ENCODE measurements at regions of chr16 and their contacts with region 1.

Region 1: GRCh38 chr16:46689365-46690280 is at the start of gene ORC6:
- DNase-seq: peak; percentile 90 to 99 (median 97)
- ATAC-seq: peak; percentile 85
- H3K4me3 ChIP-seq: peak within 1 kb of the TSS; percentile 99
- H3K4me3 Mint-ChIP-seq: no peak within 1 kb of the TSS
- H3K27ac ChIP-seq: peak within 1 kb of the TSS; percentile 94
- H3K27ac Mint-ChIP-seq: no peak within 1 kb of the TSS
- H3K4me1 ChIP-seq: peaks cover 16 to 22% of the 10 kb centered on the region in 2 donors
- H3K4me1 Mint-ChIP-seq: peaks cover 25 to 48% (median 36%) of the 10 kb centered on the region in 7 donors
- H3K27me3 ChIP-seq: no peaks in the 10 kb centered on the region
- H3K27me3 Mint-ChIP-seq: no peaks in the 10 kb centered on the region
- total RNA-seq, gene ORC6: 2.7 to 27.3 (median 5.1) TPM

Region 2: DNA sequence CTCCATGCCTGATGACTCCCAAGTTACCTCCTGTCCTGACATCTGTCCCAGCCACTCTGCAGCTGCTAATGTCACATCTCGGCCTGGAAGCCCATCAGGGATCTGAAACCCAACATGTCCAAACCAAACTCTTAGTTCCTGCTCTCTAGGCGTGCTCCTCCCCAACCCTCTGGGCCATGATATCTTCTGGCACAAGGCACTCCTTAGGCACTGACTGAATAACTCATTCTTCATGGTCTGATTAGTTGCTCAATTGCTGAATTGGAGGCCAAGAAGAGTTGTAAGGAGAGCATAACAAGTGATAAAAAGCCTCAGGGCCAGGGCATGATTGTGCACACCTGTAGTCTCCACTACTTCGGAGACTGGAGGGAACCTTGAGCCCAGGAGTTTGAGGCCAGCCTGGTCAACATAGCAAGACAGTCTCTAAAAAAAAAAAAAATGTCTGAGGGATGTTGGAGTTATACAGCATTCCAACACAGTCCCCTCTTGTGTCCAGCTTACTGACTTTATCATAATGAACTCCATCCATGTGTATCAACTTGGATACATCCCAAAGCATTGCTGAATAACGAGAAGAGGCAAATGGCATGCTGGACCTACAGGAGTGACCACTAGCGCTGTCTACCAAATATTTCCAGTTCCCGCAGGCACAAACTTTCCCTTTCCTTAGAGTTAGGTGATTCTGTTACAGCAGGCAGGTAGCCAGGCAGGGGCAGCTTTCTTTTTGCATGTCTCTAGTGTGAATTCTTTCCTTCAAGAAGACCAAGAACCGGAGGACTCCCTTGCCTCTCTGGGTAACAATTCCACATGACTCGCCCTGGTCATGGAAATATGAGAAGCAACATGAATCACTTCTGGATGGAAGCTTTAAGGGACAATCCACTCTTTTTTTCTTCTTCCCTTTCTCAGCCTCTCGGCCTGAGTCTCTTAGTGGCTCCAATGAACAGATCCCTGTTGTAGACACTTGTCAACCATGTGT is 50.4 kb before region 1 on chr16:
- CTCF ChIA-PET with region 1: no interaction called
- POLR2A ChIA-PET with region 1: no interaction called
- intact Hi-C with region 1: no loop called
- DNase-seq: no peak
- ATAC-seq: no peak
- H3K4me3 ChIP-seq: no peak overlapping the region
- H3K4me3 Mint-ChIP-seq: no peak overlapping the region
- H3K27ac ChIP-seq: no peak overlapping the region
- H3K27ac Mint-ChIP-seq: no peak overlapping the region
- H3K4me1 ChIP-seq: no peaks in the 10 kb centered on the region
- H3K4me1 Mint-ChIP-seq: no peaks in the 10 kb centered on the region
- H3K27me3 ChIP-seq: no peaks in the 10 kb centered on the region
- H3K27me3 Mint-ChIP-seq: no peaks in the 10 kb centered on the region

Region 3: GRCh38 chr16:46673320-46674013 is 16.2 kb before region 1 on chr16:
- CTCF ChIA-PET with region 1: interaction called, 5 read pairs
- POLR2A ChIA-PET with region 1: no interaction called
- intact Hi-C with region 1: loop called (anchors 1 kb)
- DNase-seq: peak in 8 of 9 donors; percentile 10 to 59 (median 44)
- ATAC-seq: peak; percentile 97
- H3K4me3 ChIP-seq: no peak overlapping the region
- H3K4me3 Mint-ChIP-seq: no peak overlapping the region
- H3K27ac ChIP-seq: no peak overlapping the region
- H3K27ac Mint-ChIP-seq: peak overlapping the region in 1 of 9 donors; percentile 21
- H3K4me1 ChIP-seq: no peaks in the 10 kb centered on the region
- H3K4me1 Mint-ChIP-seq: peaks cover 0 to 3% (median 0%) of the 10 kb centered on the region in 7 donors
- H3K27me3 ChIP-seq: no peaks in the 10 kb centered on the region
- H3K27me3 Mint-ChIP-seq: no peaks in the 10 kb centered on the region

Region 4: GRCh38 chr16:46883690-46884512 is 194.3 kb after region 1 on chr16 and contains the start of gene GPT2:
- CTCF ChIA-PET with region 1: no interaction called
- POLR2A ChIA-PET with region 1: no interaction called
- intact Hi-C with region 1: loop called (anchors 1 kb)
- DNase-seq: peak; percentile 29 to 89 (median 57)
- ATAC-seq: peak; percentile 97
- H3K4me3 ChIP-seq: peak within 1 kb of the TSS; percentile 67
- H3K4me3 Mint-ChIP-seq: peak within 1 kb of the TSS; percentile 86 to 92 (median 89)
- H3K27ac ChIP-seq: no peak within 1 kb of the TSS
- H3K27ac Mint-ChIP-seq: peak within 1 kb of the TSS in 5 of 9 donors; percentile 25 to 82 (median 71)
- H3K4me1 ChIP-seq: peaks cover 0 to 3% of the 10 kb centered on the region in 2 donors
- H3K4me1 Mint-ChIP-seq: peaks cover 8 to 21% (median 16%) of the 10 kb centered on the region in 7 donors
- H3K27me3 ChIP-seq: no peaks in the 10 kb centered on the region
- H3K27me3 Mint-ChIP-seq: peaks cover 0 to 39% (median 6%) of the 10 kb centered on the region in 5 donors
- total RNA-seq, gene GPT2: 0.40 to 7.7 (median 0.73) TPM

Region 5: DNA sequence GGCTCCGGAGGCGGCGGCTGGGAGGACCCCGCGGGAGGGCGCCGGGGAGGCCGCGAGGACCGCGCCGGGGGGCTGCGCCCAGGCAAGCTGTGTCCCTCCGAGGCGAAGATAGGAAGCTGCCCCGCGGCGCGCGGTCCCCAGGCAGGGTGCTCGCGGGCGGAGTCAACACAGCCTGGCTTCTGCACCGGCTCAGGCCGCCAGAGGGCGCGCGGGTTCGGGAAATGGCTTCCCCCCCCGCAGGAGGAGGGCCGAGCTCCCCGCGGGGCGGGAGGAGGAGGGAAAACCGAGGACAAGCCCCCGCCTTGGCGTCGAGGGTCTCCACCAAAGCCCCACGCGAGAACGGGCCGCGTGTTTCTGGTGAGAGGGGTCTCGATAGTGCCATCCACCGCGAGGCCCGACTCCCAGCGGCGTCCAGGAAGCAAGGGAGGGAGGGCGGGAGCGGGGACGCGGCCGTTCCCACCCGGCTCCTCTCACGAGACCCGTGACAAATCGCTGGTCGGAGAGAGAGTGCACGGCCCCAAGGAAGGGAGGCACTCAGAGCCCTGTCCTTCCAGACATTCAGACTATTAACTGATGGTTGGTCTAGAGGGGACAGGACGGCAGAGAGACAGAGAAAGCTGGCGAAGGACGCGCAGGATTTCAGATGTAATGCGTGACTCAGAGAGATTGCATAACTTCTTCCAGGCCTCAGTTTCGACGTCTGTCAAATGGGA is 348.3 kb after region 1 on chr16:
- CTCF ChIA-PET with region 1: no interaction called
- POLR2A ChIA-PET with region 1: no interaction called
- intact Hi-C with region 1: loop called (anchors 1 kb)
- DNase-seq: peak; percentile 69 to 95 (median 83)
- ATAC-seq: peak; percentile 99
- H3K4me3 ChIP-seq: peak overlapping the region; percentile 62
- H3K4me3 Mint-ChIP-seq: peak overlapping the region; percentile 25 to 85 (median 74)
- H3K27ac ChIP-seq: peak overlapping the region; percentile 27
- H3K27ac Mint-ChIP-seq: peak overlapping the region in 1 of 9 donors; percentile 38
- H3K4me1 ChIP-seq: no peaks in the 10 kb centered on the region
- H3K4me1 Mint-ChIP-seq: peaks cover 0 to 8% (median 4%) of the 10 kb centered on the region in 7 donors
- H3K27me3 ChIP-seq: no peaks in the 10 kb centered on the region
- H3K27me3 Mint-ChIP-seq: peaks cover 0 to 13% (median 0%) of the 10 kb centered on the region in 5 donors

Region 6: DNA sequence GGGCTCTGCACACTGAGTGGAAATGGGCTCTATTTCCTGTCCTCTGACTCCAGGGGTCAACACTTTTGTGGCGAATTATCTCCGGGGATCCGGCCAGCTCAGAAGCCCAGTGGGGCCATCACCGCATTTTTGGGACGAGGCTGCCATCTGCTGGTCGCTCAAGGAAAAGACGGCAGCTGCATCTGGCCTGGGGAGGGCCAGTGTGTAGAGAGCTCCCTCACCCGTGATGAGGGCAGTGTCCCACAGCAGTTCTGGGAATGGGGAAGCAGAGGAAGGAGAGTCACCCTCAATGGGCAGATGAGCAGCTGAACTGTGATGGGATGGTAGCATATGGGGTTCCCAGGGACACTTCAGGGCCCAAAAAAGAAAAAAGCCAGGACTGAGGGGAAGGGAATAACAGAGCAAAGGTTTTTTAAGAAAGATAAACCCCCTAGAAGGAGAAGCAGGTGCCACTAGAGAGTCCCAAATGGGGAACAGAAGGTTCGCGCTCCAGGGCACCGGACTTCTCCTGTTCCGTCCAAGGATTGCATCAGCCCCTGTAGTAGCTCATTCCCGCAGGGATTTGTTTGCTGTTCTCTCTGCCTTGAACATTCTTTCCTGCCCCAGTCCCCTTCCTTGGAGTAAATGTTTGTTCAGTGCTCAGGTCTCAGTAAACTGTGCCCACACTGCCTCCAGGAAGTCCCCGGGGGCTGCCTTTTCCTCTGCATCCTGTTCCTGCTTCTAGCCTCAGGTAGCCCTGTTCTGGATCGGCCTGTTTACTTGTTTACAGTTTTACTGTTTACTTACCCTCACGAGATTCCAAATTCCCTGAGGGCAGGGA is 1475.5 kb after region 1 on chr16:
- CTCF ChIA-PET with region 1: interaction called, 4 read pairs
- POLR2A ChIA-PET with region 1: no interaction called
- intact Hi-C with region 1: loop called (anchors 1 to 10 kb)
- DNase-seq: peak; percentile 20 to 71 (median 45)
- ATAC-seq: peak; percentile 87
- H3K4me3 ChIP-seq: no peak overlapping the region
- H3K4me3 Mint-ChIP-seq: peak overlapping the region in 1 of 10 donors; percentile 32
- H3K27ac ChIP-seq: no peak overlapping the region
- H3K27ac Mint-ChIP-seq: peak overlapping the region in 2 of 9 donors; percentile 50 to 88
- H3K4me1 ChIP-seq: no peaks in the 10 kb centered on the region
- H3K4me1 Mint-ChIP-seq: peaks cover 0 to 8% (median 4%) of the 10 kb centered on the region in 7 donors
- H3K27me3 ChIP-seq: no peaks in the 10 kb centered on the region
- H3K27me3 Mint-ChIP-seq: peaks cover 4 to 8% (median 4%) of the 10 kb centered on the region in 5 donors

Region 7: DNA sequence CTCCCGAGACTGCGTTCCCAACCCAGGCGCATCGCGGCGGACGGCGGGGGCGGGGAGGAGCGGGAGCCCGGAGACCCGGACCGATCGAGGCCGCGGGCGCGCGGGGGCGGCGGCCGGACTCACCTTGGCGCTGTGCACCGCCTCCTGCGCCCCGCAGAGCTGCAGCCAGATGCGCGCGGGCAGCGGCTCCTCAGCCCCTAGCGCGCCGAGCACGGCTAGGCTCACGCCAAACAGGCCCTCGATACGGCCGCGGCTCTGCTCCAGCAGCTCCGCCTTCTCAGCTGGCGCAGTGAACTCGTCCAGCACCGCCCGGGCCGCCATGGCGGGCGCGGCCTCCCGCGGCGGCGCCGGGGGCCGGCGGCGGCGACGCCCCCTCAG is 1920.0 kb after region 1 on chr16:
- CTCF ChIA-PET with region 1: no interaction called
- POLR2A ChIA-PET with region 1: no interaction called
- intact Hi-C with region 1: loop called (anchors 1 to 5 kb)
- DNase-seq: no peak
- ATAC-seq: peak; percentile 39
- H3K4me3 ChIP-seq: peak overlapping the region; percentile 66
- H3K4me3 Mint-ChIP-seq: peak overlapping the region in 4 of 10 donors; percentile 24 to 95 (median 56)
- H3K27ac ChIP-seq: peak overlapping the region; percentile 94
- H3K27ac Mint-ChIP-seq: peak overlapping the region in 8 of 9 donors; percentile 88 to 99 (median 94)
- H3K4me1 ChIP-seq: peaks cover 63 to 76% of the 10 kb centered on the region in 2 donors
- H3K4me1 Mint-ChIP-seq: peaks cover 24 to 50% (median 43%) of the 10 kb centered on the region in 7 donors
- H3K27me3 ChIP-seq: no peaks in the 10 kb centered on the region
- H3K27me3 Mint-ChIP-seq: no peaks in the 10 kb centered on the region

Measured in naive thymus-derived CD4-positive, alpha-beta T cell (primary cell).